A673 (cell line): ENCODE measurements at regions of chr7 and their contacts with region 1.

Region 1: DNA sequence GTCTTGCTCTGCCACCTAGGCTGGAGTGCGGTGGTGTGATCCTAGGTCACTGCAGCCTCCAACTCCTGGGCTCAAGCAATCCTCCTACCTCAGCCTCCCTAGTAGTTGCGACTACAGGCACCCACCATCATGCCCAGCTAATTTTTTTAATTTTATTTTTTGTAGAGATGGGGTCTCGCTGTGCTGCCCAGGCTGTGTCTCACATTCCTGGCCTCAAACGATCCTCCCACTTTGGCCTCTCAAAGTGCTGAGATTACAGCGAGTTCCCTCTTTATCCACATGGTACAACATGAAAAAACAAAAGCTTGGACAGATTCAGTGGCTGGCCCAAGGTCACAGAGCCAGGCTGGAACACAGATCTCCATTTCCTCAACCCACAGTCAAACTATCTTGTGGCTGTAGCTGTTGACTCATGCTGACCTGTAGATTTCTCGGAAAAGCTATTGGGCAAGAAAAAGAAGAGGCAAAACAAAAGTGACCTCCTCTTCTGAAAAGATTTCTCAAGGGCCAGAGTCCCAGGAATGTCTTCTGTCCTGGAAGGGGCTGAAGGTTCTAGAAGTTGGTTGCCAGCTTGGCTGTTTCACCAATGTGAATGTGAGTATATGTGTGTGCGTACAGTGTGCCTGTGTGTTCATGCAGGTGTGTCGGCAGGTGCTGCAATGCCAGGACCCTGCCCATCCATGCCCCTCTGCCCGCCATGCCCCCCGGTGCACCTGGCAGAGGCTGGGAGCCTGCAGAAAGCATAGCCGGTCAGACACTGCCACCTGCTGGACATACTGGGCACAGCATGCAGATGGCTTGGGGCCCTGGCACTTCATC is 28.4 kb downstream of the TMEM130 start:
- DNase-seq: peak; percentile 49
- H3K4me3 ChIP-seq: no peak overlapping the region
- H3K27ac ChIP-seq: no peak overlapping the region
- H3K4me1 ChIP-seq: peaks cover 10% of the 10 kb centered on the region
- H3K27me3 ChIP-seq: no peaks in the 10 kb centered on the region
- CTCF ChIP-seq: peak; percentile 94

Region 2: DNA sequence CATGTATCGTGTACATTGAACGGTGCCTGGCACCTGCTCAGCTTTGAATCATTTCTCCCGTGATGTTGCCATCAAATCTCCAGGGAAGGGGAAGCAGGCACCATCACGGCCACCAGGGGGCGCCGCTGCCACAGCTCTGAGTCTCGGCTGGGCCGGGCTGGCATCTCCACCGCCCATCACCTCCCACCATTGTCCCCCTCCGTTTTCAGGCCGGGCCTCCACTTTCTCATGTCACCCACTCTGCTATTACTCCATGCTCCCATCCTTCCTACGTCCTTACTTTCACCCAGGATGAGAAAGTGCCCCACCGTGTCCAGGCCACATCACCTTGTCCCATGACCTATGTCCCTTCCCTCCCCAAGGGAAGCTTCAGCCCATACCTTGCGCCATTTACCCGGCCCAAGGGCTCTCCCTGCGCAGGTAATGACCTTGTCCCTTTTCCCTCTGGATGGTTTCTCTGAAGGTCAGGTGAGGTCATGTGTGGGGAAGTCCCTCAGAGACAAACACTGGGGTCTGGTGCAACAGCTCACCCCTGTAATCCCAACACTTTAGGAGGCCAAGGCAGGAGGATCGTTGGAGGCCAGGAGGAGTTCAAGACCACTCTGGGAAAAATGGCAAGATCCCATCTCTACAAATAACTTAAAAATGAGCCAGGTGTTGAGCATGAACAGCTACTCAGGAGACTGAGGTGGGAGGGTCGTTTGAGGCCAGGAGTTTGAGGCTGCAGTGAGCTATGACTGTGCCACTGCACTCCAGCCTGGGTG is 819.6 kb before region 1 on chr7:
- CTCF ChIA-PET with region 1: no interaction called
- POLR2A ChIA-PET with region 1: no interaction called
- intact Hi-C with region 1: loop called (anchors 5 kb)
- DNase-seq: peak; percentile 79
- H3K4me3 ChIP-seq: no peak overlapping the region
- H3K27ac ChIP-seq: no peak overlapping the region
- H3K4me1 ChIP-seq: no peaks in the 10 kb centered on the region
- H3K27me3 ChIP-seq: no peaks in the 10 kb centered on the region
- CTCF ChIP-seq: peak; percentile 96

Region 3: DNA sequence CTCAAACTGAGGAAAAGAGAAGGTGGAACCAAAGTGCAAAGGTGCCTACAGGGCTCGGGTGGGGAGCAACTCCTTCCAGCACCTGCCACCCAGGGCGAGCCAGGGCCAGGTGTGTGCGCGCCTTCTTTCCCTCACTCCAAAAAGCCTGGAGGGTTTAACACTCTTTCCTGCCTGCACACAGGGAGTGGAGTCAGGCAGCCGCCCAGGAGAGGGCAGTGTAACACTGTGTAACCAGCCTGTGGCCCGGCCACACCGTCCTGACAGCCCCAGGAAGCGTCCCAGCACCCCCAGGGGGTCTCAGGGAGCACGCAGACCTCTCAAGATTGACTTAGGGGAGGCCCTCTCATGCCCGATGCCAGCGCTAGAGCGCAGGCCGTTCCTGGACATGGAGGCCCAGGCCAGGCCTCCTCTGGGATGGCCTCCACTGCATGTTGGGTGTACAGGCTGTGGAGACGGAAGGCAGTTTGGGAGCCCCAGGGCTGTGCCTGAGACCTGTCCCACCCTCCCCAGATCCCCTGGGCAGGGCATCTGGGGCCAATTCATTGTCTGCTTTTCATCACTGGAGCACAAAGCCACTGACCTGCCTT is 546.5 kb before region 1 on chr7:
- CTCF ChIA-PET with region 1: no interaction called
- POLR2A ChIA-PET with region 1: no interaction called
- intact Hi-C with region 1: loop called (anchors 5 kb)
- DNase-seq: peak; percentile 72
- H3K4me3 ChIP-seq: no peak overlapping the region
- H3K27ac ChIP-seq: no peak overlapping the region
- H3K4me1 ChIP-seq: peaks cover 9% of the 10 kb centered on the region
- H3K27me3 ChIP-seq: no peaks in the 10 kb centered on the region
- CTCF ChIP-seq: peak; percentile 79

Region 4: DNA sequence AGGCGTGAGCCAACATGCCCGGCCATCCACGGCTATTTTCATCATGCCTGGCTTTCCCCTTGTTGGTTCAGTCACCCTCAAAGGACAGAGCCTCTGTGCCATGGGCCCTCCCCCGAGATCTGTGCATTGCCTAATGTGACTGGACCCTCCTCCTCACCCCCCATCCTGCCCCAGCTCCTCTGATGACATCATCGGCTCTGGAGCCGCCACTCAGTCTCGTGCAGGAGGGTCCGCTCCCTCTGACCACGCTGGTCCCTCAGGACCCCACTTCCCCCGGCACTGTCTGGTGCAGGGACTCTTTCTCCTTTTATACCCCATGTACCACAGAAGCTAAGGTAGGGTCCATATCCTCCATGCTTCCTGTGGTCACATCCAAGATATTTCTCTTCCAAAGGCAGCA is 407.3 kb before region 1 on chr7:
- CTCF ChIA-PET with region 1: no interaction called
- POLR2A ChIA-PET with region 1: no interaction called
- intact Hi-C with region 1: loop called (anchors 1 kb)
- DNase-seq: no peak
- H3K4me3 ChIP-seq: no peak overlapping the region
- H3K27ac ChIP-seq: no peak overlapping the region
- H3K4me1 ChIP-seq: no peaks in the 10 kb centered on the region
- H3K27me3 ChIP-seq: no peaks in the 10 kb centered on the region
- CTCF ChIP-seq: no peak

Region 5: GRCh38 chr7:98493030-98493778 is 348.2 kb before region 1 on chr7:
- CTCF ChIA-PET with region 1: no interaction called
- POLR2A ChIA-PET with region 1: no interaction called
- intact Hi-C with region 1: no loop called
- DNase-seq: no peak
- H3K4me3 ChIP-seq: no peak overlapping the region
- H3K27ac ChIP-seq: no peak overlapping the region
- H3K4me1 ChIP-seq: no peaks in the 10 kb centered on the region
- H3K27me3 ChIP-seq: no peaks in the 10 kb centered on the region
- CTCF ChIP-seq: no peak

Region 6: GRCh38 chr7:98745722-98746318 is 95.6 kb before region 1 on chr7:
- CTCF ChIA-PET with region 1: interaction called, 3 read pairs
- POLR2A ChIA-PET with region 1: no interaction called
- intact Hi-C with region 1: loop called (anchors 5 kb)
- DNase-seq: peak; percentile 75
- H3K4me3 ChIP-seq: no peak overlapping the region
- H3K27ac ChIP-seq: no peak overlapping the region
- H3K4me1 ChIP-seq: no peaks in the 10 kb centered on the region
- H3K27me3 ChIP-seq: peaks cover 15% of the 10 kb centered on the region
- CTCF ChIP-seq: peak; percentile 95

Region 7: GRCh38 chr7:99072126-99072525 is 230.7 kb after region 1 on chr7:
- CTCF ChIA-PET with region 1: no interaction called
- POLR2A ChIA-PET with region 1: no interaction called
- intact Hi-C with region 1: no loop called
- DNase-seq: no peak
- H3K4me3 ChIP-seq: no peak overlapping the region
- H3K27ac ChIP-seq: no peak overlapping the region
- H3K4me1 ChIP-seq: no peaks in the 10 kb centered on the region
- H3K27me3 ChIP-seq: no peaks in the 10 kb centered on the region
- CTCF ChIP-seq: no peak